CD4-positive, alpha-beta memory T cell (primary cell): ENCODE measurements at regions of chr10 and their contacts with region 1.

Region 1: DNA sequence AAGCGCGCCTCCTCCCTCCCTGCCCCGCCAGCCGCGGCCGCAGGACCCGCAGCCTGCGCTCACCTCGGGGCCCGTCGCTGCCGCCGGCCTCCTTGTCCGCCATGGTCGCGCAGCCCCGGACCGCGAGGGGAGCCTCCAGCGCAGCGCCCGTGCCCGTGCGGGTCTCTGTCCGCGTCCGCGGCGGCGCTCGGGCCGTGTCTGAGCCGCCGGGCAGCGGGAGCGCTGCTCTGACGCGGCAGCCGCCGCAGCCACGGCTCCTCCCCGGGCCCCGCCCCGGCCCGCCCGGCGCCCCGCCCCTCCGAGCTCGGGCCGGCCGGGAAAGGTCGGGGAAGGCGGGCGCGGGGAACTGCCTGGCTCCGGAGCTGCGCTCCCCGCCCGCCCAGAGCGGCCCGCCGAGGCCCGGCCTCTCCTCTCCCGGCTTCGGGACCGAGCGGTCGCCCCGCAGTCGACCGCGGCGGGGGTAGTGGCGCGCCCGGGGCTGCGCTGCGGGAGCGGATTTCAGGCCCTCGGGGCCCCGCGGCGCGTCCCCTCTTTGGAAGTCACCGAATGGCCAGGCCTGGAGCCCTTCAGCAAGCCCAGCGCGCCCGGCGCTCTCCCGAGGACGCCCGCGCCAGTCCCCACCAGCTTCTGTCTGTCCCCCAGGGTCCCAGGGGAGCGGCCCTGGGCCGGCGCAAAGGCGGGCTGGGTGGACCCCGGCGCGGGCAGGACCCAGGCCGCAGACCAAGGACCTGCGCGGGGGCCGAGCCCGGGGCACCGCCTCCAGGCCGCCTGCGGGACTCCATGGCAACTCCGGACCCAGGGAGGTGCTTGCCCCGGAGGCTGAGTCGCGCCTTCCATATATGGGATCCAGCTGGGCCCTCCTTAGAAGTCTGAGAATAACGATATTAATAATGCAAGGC is at the start of gene HSPA12A:
- DNase-seq: peak in 4 of 5 donors; percentile 23 to 36 (median 32)
- H3K4me3 ChIP-seq: peak within 1 kb of the TSS in 1 of 2 donors; percentile 14
- H3K4me3 Mint-ChIP-seq: peak within 1 kb of the TSS; percentile 8 to 72 (median 62)
- H3K27ac ChIP-seq: no peak within 1 kb of the TSS
- H3K27ac Mint-ChIP-seq: peak within 1 kb of the TSS in 1 of 7 donors; percentile 75
- H3K4me1 ChIP-seq: peaks cover 13% of the 10 kb centered on the region
- H3K4me1 Mint-ChIP-seq: peaks cover 2 to 27% (median 5%) of the 10 kb centered on the region in 4 donors
- H3K27me3 ChIP-seq: peaks cover 24% of the 10 kb centered on the region
- H3K27me3 Mint-ChIP-seq: peaks cover 47 to 51% of the 10 kb centered on the region in 2 donors
- total RNA-seq, gene HSPA12A: 0.36 to 0.64 TPM

Region 2: DNA sequence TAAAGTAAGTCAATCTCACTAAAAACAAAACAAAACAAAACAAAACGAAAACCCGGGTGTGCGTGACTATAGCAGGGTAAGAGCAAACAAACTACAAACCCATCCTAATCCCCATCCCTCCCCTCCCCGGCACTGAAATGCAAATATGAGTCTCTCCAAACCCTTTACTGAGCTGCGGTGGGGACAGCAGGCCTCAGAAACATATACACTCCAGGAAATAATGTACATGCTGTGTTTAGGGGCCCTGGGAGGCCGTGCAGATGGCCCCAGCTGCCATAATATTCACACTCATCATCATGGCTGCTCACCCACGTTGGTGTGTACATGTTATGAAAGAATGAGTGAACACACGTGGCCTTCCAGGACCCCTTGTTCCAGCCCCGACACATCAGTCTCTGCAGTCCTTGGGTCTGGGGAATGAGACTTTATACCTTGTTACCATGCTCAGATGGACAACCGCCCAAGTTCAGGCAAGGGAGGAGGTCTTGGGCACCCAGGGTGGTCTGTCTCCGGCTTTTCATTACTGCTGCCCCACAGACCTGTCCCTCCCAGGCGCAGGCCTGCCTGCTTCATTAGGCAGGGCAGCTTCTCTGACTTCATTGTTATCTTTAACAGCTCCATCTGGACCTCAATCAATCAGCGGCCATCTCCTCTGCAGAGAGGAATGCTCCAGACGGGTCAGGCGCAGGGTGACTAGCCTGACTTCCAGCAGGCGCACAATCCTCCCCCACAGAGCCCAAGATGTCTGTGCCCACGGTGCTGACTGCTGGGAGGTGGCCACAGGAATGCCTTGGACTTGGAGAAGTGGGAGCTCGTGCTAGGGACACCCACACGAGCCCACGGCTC is 20.8 kb before region 1 on chr10:
- CTCF ChIA-PET with region 1: no interaction called
- POLR2A ChIA-PET with region 1: no interaction called
- intact Hi-C with region 1: loop called (anchors 1 kb)
- DNase-seq: no peak
- H3K4me3 ChIP-seq: no peak overlapping the region
- H3K4me3 Mint-ChIP-seq: peak overlapping the region in 3 of 8 donors; percentile 21 to 47 (median 42)
- H3K27ac ChIP-seq: no peak overlapping the region
- H3K27ac Mint-ChIP-seq: no peak overlapping the region
- H3K4me1 ChIP-seq: peaks cover 29% of the 10 kb centered on the region
- H3K4me1 Mint-ChIP-seq: peaks cover 21 to 60% (median 43%) of the 10 kb centered on the region in 4 donors
- H3K27me3 ChIP-seq: peaks cover 48% of the 10 kb centered on the region
- H3K27me3 Mint-ChIP-seq: peaks cover 49 to 56% of the 10 kb centered on the region in 2 donors